Activated naive CD4-positive, alpha-beta T cell treated with anti-CD3 and anti-CD28 coated beads for 36 hours (primary cell): ENCODE measurements at regions of chr7 and their contacts with region 1.

Region 1: DNA sequence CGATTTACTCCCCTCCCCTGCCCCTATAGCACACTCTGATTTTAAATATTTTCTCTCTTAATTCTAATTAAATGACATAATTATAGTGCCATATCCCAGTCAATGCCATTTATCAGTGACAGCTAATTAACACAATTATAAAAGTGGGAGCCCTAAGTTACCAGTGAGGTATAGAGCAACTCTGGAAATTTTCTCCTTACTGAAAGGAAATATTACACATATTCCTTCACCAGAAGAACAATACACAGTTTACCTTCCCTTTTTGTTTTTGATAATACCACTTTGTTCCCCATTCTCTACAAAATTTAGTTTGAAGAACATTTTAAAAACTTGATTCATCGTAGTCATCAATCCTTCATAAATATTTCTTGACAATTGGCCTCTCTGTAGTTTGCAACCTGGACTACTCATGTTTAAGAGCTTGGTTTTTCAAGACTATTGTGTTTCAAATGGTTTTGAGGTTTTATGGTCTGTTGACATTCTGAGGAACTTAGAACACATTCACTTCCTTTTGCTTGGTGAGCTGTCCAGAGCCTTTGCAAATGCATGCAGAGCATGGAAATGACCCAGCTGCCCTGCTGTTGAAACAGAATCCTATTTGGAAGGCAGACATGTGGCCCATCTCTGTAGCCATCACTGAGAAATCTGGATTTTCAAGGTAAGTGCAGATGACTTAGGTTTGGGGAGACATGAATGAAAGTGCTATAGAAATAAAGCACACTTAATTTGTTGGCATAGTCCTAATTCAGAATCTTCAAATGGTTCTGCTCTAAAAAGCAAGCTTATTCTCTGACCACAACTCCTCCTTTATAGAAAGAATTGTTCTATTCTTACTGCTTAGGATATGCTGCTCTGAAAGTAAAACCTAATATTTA is at the start of gene GPR141:
- DNase-seq: no peak
- H3K4me3 Mint-ChIP-seq: no peak within 1 kb of the TSS
- H3K27ac Mint-ChIP-seq: no peak within 1 kb of the TSS
- H3K4me1 Mint-ChIP-seq: no peaks in the 10 kb centered on the region
- H3K27me3 Mint-ChIP-seq: peaks cover 12% of the 10 kb centered on the region
- total RNA-seq, gene GPR141: not detected

Region 2: GRCh38 chr7:37663693-37664092 is 19.8 kb before region 1 on chr7:
- CTCF ChIA-PET with region 1: no interaction called
- intact Hi-C with region 1: no loop called
- DNase-seq: no peak
- H3K4me3 Mint-ChIP-seq: no peak overlapping the region
- H3K27ac Mint-ChIP-seq: no peak overlapping the region
- H3K4me1 Mint-ChIP-seq: no peaks in the 10 kb centered on the region
- H3K27me3 Mint-ChIP-seq: peaks cover 10% of the 10 kb centered on the region

Region 3: DNA sequence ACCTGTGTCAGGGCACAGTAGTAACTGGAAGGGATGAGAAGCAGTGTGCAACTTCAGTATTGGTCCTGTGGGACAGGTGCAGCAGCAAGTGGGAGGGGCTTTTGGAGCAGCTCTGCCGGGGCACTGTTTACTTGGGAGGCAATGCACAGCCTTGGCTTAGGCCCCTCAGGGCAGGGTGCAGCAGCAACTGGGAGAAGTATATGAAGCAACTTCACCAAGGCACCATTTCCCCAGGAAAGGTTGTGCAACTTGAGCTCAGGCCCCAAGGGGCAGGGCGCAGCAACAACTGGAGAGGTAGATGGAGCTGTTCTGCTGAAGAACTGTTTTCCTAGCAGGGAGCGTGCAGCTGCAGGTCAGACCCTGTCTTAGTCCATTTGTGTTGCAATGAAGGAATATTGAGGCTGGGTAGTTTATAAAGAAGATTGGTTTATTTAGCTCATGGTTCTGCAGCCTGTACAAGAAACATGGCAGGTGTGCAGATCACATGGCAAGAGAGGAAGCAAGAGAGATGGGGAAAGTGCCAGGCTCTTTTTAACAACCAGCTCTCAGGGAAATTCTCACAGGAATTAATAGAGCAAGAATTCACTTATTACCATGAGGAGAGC is 10.8 kb after region 1 on chr7:
- CTCF ChIA-PET with region 1: no interaction called
- intact Hi-C with region 1: no loop called
- DNase-seq: no peak
- H3K4me3 Mint-ChIP-seq: no peak overlapping the region
- H3K27ac Mint-ChIP-seq: no peak overlapping the region
- H3K4me1 Mint-ChIP-seq: no peaks in the 10 kb centered on the region
- H3K27me3 Mint-ChIP-seq: peaks cover 2% of the 10 kb centered on the region

Region 4: DNA sequence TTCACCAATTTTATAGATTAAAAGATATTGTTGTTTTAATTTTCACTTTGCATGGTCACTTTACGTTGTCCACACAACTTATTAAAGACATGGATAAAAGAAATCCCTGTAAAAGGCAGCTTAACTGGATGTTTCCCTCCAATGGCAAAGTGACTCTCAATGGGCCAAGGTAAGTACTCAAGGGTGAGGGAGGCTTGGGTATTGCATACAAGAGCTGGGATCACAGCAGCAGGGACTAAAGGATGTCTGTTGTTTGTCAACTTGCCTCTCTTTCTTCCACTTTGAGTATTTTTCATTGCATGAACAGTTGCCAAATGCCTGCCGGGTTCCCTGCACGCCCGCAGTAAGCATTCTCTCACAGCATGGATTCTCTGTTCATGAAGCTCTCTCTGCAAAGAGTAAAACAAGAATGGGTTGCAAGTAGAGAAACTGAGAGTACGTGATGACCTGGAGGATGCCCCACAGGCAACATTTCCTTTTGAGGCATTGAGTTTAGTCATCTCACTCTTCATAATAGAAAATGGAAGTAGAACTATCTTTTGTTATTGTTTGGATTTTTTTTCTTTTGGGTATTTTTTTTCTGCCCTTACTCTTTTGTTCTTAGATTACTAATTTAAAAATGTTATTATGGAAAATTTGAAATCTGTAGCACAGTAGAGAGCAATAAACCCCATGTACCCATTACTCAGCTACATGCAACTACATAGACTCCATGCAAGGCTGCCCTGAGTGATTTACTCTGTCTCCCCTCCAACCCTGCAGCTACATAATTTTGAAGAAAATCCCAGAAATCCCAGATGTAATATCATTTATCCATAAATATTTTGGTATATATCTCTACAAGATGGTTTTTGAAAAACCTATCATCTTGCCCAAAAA is 26.4 kb after region 1 on chr7:
- CTCF ChIA-PET with region 1: no interaction called
- intact Hi-C with region 1: loop called (anchors 1 kb)
- DNase-seq: no peak
- H3K4me3 Mint-ChIP-seq: no peak overlapping the region
- H3K27ac Mint-ChIP-seq: no peak overlapping the region
- H3K4me1 Mint-ChIP-seq: no peaks in the 10 kb centered on the region
- H3K27me3 Mint-ChIP-seq: peaks cover 7% of the 10 kb centered on the region